ENCODE measurements at regions of chr19 and their contacts with region 1.

Region 1: DNA sequence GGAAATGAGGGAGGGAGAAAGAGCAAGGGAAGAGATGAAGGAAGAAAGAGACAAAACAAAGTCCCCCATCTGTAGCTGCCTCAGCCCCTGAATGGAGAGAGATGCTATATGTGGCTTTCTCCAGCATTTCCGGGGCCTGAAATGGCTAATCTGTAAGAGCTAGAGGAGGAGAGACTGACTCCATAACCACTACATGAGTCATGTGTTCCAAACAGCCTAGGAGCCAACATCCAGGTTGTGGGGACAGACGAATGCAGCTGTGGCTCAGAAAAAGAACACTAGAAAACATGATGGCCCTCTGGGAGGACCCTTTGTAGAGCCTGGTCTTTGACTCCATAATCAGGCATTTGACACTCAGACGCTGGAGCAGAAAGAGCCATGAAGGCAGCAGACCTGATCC is 292.0 kb upstream of the ZNF507 start:
- DNase-seq: no peak
- ATAC-seq: no peak
- H3K4me3 ChIP-seq: no peak overlapping the region
- H3K27ac ChIP-seq: no peak overlapping the region
- H3K4me1 ChIP-seq: no peaks in the 10 kb centered on the region
- H3K27me3 ChIP-seq: peaks cover 14% of the 10 kb centered on the region
- CTCF ChIP-seq: no peak

Region 2: GRCh38 chr19:31706691-31707620 is 346.4 kb before region 1 on chr19:
- CTCF ChIA-PET with region 1: no interaction called
- POLR2A ChIA-PET with region 1: interaction called, 16 read pairs
- in situ Hi-C with region 1: no loop called
- intact Hi-C with region 1: no loop called
- DNase-seq: no peak
- ATAC-seq: no peak
- H3K4me3 ChIP-seq: no peak overlapping the region
- H3K27ac ChIP-seq: no peak overlapping the region
- H3K4me1 ChIP-seq: no peaks in the 10 kb centered on the region
- H3K27me3 ChIP-seq: no peaks in the 10 kb centered on the region; the same call in 1 of the 2 replicates
- CTCF ChIP-seq: no peak